BJ (cell line): ENCODE measurements at regions of chr3 and their contacts with region 1.

Region 1: DNA sequence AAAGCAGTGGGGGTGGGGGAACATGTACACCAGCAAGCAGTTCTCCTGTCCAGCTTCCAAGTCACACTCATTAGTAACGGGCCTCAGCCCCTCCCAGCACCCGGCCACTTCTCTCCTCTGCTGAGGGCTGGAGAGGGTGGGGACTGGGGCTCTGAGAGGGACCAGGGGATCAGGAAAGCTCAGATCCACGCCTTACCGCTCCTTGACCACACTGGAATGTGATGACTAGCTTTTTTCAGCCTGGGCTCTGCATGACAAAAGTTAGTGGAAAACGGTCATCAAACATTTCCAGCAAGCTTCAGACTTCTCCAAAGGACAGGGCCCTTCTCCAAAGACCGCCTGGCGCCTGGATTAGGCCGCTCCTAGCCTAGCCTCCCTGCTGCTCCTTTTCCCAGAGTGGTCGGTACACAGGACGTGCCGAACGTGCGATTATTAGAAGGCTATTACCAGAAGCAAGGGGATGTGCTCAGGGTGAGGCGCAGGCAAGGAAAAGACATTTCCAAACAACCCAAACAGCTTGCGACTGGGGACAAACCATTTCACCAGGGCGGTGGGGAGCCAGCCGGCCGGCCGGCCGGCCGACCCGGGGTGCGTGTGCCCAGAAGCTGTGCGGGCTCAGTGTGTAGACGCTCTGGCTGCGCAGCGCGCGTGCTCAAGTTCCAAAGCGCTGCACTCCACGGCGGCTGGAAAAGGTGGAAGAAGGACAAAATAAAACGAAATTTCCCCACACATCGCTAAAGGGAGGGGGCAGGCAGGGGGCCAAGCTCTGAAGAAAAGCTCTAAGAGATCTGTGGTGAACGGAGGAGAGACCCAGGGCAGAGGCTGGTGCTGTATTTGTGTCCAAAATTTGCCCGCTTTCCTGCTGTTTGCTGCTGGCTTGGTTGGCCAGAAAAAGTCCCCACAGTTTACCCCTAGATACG is 51.0 kb upstream of the SSR3 start:
- DNase-seq: peak; percentile 47
- H3K4me3 ChIP-seq: peak overlapping the region; percentile 26
- H3K27me3 ChIP-seq: no peaks in the 10 kb centered on the region
- CTCF ChIP-seq: no peak

Region 2: DNA sequence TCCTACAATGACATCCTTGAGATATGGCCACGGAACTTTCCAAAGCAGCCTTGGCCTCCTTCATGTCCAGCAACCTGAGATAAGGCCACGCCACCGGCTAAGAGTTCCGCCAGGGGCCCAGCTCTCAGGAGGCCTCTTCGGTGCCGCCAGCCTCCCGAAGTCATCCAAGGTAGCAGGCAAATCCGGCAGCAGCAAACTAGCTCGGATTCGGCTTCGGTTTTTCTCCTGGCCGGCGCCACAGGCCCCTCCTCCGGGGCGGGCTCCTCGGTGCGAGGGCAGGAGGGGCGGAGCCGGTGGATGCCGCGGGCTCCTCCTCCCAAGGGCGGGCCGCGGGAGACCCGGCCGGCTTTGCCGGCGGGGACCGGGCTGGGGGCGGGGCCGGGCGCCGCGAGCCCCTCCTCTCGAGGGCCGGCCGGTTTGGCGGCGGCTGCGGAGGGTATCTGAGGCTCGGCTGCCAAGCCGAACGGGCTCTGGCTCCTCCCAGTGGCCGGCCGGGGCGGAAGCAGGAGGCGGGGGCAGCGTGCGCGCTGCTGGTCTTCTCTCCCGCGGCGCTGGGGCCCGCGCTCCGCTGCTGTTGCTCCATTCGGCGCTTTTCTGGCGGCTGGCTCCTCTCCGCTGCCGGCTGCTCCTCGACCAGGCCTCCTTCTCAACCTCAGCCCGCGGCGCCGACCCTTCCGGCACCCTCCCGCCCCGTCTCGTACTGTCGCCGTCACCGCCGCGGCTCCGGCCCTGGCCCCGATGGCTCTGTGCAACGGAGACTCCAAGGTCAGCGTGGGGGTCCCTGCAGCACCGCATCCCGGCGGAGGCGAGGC is 735.6 kb before region 1 on chr3 and contains the start of gene GMPS:
- CTCF ChIA-PET with region 1: no interaction called
- POLR2A ChIA-PET with region 1: interaction called, 11 read pairs
- DNase-seq: peak; percentile 61
- H3K4me3 ChIP-seq: peak within 1 kb of the TSS; percentile 99
- H3K27me3 ChIP-seq: no peaks in the 10 kb centered on the region
- CTCF ChIP-seq: peak; percentile 14; the same call in 1 of the 2 replicates
- polyA plus RNA-seq, gene GMPS: 13.6 and 32.1 TPM in 2 replicates